Vagina (tissue), 2 donors: ENCODE measurements at regions of chrX and their contacts with region 1.

Region 1: GRCh38 chrX:139932901-139933796 is at the start of gene ATP11C:
- DNase-seq: peak in 1 of 2 donors; percentile 92
- H3K4me3 ChIP-seq: peak within 1 kb of the TSS; percentile 69 to 77
- H3K27ac ChIP-seq: peak within 1 kb of the TSS; percentile 94
- H3K4me1 ChIP-seq: peaks cover 4% of the 10 kb centered on the region
- H3K27me3 ChIP-seq: no peaks in the 10 kb centered on the region
- CTCF ChIP-seq: no peak
- POLR2A ChIP-seq: peak in 1 of 2 donors; percentile 54
- total RNA-seq, gene ATP11C: 24.1 TPM

Region 2: GRCh38 chrX:138408101-138408500 is 1525.0 kb before region 1 on chrX:
- intact Hi-C with region 1: loop called (anchors 5 kb)
- DNase-seq: no peak
- H3K4me3 ChIP-seq: no peak overlapping the region
- H3K27ac ChIP-seq: no peak overlapping the region
- H3K4me1 ChIP-seq: no peaks in the 10 kb centered on the region
- H3K27me3 ChIP-seq: no peaks in the 10 kb centered on the region
- CTCF ChIP-seq: no peak
- POLR2A ChIP-seq: no peak

Region 3: GRCh38 chrX:141455105-141455504 is 1522.0 kb after region 1 on chrX:
- intact Hi-C with region 1: no loop called
- DNase-seq: no peak
- H3K4me3 ChIP-seq: no peak overlapping the region
- H3K27ac ChIP-seq: no peak overlapping the region
- H3K4me1 ChIP-seq: no peaks in the 10 kb centered on the region
- H3K27me3 ChIP-seq: no peaks in the 10 kb centered on the region
- CTCF ChIP-seq: no peak
- POLR2A ChIP-seq: no peak